ENCODE measurements at regions of chr12 and their contacts with region 1.

Region 1: DNA sequence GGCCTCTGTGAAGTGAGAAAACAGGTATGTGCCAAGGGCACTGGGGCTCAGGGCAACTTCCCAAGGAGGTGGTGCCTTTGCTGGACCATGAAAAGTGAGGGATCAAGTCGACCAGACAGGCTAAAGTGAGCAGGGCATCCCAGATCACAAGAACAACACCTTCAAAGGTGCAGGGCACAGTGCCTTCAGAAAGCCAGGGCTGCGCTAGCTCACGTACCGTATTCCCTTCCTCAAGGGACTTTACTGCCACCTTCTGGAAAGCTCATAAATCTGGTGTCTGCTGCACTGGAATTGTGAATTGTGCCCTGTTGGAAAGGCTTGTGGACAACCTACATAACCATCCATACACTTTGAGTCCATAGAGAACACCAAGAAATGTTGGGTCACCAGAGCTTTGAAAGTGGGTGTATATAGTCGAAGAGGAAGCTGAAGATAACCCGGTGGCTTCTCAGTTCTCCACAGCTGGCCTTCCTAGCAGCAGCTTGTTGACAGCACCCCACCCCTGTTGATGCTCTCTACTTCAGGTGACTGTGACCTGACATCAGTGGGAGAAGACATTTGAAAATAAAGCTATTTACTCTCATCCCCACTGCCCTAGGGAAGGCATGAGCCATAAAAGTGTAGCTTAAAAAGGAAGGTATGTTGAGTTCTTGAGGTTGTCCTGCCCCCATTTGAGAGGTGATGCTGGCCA is 24.5 kb downstream of the FIGNL2 start:
- DNase-seq: no peak
- H3K4me3 ChIP-seq: no peak overlapping the region
- H3K27ac ChIP-seq: no peak overlapping the region
- H3K4me1 ChIP-seq: peaks cover 6 to 29% (median 22%) of the 10 kb centered on the region in 4 experiments
- H3K27me3 ChIP-seq: peaks cover 0 to 18% (median 13%) of the 10 kb centered on the region in 4 experiments; a peak in 5 of 7 replicates
- CTCF ChIP-seq: peak; percentile 34 to 75 (median 67)
- EP300 ChIP-seq: no peak
- POLR2A ChIP-seq: no peak
- RAD21 ChIP-seq: peak; percentile 74 to 76

Region 2: GRCh38 chr12:51424662-51425438 is 399.2 kb before region 1 on chr12 and contains the start of gene SLC4A8:
- CTCF ChIA-PET with region 1: interaction called, 35 read pairs
- POLR2A ChIA-PET with region 1: no interaction called
- DNase-seq: peak; percentile 85 to 96
- H3K4me3 ChIP-seq: peak within 1 kb of the TSS; percentile 52 to 79 (median 62)
- H3K27ac ChIP-seq: no peak within 1 kb of the TSS
- H3K4me1 ChIP-seq: peaks cover 0 to 10% (median 2%) of the 10 kb centered on the region in 4 experiments; a peak in 4 of 7 replicates
- H3K27me3 ChIP-seq: no peaks in the 10 kb centered on the region
- CTCF ChIP-seq: peak; percentile 66 to 83 (median 77)
- EP300 ChIP-seq: no peak
- POLR2A ChIP-seq: peak in 1 of 2 experiments; percentile 57; a peak in 1 of 3 replicates
- RAD21 ChIP-seq: peak; percentile 64 to 80
- total RNA-seq, gene SLC4A8: 13.4 and 15.2 TPM in 2 replicates

Region 3: DNA sequence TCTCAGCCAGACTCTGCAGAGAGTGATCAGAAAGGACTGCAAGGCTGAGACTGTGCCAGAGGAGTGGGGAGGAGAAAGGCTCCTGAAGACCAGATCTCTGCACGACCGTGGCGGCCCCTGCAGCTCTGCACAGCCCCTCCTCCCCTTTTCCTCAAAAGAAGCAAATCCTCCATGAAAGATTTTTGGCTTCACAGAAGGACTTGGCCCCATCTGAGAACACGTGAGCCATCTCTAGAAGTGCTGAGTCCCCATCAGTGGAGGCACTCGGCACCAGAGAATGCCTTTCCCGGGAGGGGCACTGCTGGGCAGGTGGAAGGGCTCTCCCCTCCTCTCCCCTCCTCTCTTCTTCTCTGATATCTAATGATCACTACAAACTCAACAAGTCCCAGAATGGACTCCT is 17.7 kb after region 1 on chr12:
- CTCF ChIA-PET with region 1: interaction called, 47 read pairs
- POLR2A ChIA-PET with region 1: interaction called, 10 read pairs
- DNase-seq: no peak
- H3K4me3 ChIP-seq: no peak overlapping the region
- H3K27ac ChIP-seq: no peak overlapping the region
- H3K4me1 ChIP-seq: peaks cover 13 to 51% (median 33%) of the 10 kb centered on the region in 4 experiments
- H3K27me3 ChIP-seq: peaks cover 0 to 6% (median 4%) of the 10 kb centered on the region in 4 experiments; a peak in 4 of 7 replicates
- CTCF ChIP-seq: no peak
- EP300 ChIP-seq: no peak
- POLR2A ChIP-seq: no peak
- RAD21 ChIP-seq: no peak

Region 4: GRCh38 chr12:51863933-51864832 is 40.2 kb after region 1 on chr12:
- CTCF ChIA-PET with region 1: interaction called, 139 read pairs
- POLR2A ChIA-PET with region 1: interaction called, 12 read pairs
- DNase-seq: peak in 1 of 2 experiments; percentile 89
- H3K4me3 ChIP-seq: peak overlapping the region; percentile 41 to 73 (median 66)
- H3K27ac ChIP-seq: peak overlapping the region; percentile 75
- H3K4me1 ChIP-seq: peaks cover 16 to 36% (median 30%) of the 10 kb centered on the region in 4 experiments
- H3K27me3 ChIP-seq: peaks cover 0 to 23% (median 21%) of the 10 kb centered on the region in 4 experiments; a peak in 5 of 7 replicates
- CTCF ChIP-seq: no peak
- EP300 ChIP-seq: no peak
- POLR2A ChIP-seq: peak in 1 of 2 experiments; percentile 85; a peak in 2 of 3 replicates
- RAD21 ChIP-seq: no peak

Region 5: GRCh38 chr12:51891843-51892242 is 67.8 kb after region 1 on chr12:
- CTCF ChIA-PET with region 1: interaction called, 10 read pairs
- POLR2A ChIA-PET with region 1: interaction called, 4 read pairs
- DNase-seq: no peak
- H3K4me3 ChIP-seq: no peak overlapping the region
- H3K27ac ChIP-seq: no peak overlapping the region
- H3K4me1 ChIP-seq: peaks cover 0 to 12% (median 5%) of the 10 kb centered on the region in 4 experiments; a peak in 6 of 7 replicates
- H3K27me3 ChIP-seq: peaks cover 0 to 10% (median 6%) of the 10 kb centered on the region in 4 experiments; a peak in 3 of 7 replicates
- CTCF ChIP-seq: peak in 1 of 3 experiments; percentile 13; a peak in 1 of 4 replicates
- EP300 ChIP-seq: no peak
- POLR2A ChIP-seq: no peak
- RAD21 ChIP-seq: peak in 1 of 2 experiments; percentile 16; a peak in 2 of 4 replicates

Region 6: DNA sequence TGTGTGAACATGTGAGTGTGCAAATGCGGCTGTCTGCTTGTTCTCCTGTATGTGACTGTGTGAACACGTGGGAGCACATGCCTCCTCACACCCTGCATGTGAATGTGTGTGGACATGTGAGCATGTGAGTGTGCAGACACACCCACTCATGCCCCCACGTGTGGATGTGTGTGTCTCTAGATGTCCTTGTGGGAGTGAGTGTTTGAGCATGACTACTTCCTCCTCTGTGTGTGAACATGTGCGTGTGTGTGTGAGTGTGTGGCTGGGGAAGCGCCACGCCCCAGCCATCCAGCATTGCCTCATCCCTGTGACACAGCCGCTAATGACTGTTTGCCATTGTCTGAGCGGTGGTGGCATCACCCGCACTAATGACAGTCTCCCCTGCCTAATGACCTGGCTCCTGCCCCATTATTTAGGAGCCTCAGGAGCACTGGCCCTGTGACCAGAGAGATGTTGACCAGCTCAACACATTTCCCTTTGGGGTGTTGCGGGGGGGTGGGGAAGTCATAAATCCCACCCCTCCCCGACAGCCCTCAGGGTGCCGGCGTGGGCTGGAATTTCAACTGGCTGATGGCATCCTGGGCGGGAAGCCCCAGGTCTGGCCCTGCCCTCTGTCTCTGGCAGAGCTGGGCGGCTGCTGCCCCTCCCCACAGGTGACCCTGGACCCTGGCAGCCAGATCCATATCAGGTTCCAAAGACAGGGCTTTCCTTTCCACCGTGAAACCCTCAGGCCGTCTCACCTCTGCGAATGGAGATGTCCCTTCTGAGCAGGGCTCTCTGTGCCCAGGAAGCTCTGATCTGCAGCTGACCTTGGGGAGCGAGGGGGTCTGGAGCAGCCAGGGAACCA is 379.3 kb after region 1 on chr12:
- CTCF ChIA-PET with region 1: no interaction called
- POLR2A ChIA-PET with region 1: no interaction called
- DNase-seq: no peak
- H3K4me3 ChIP-seq: no peak overlapping the region
- H3K27ac ChIP-seq: no peak overlapping the region
- H3K4me1 ChIP-seq: peaks cover 0 to 24% (median 6%) of the 10 kb centered on the region in 4 experiments; a peak in 4 of 7 replicates
- H3K27me3 ChIP-seq: no peaks in the 10 kb centered on the region
- CTCF ChIP-seq: no peak
- EP300 ChIP-seq: no peak
- POLR2A ChIP-seq: no peak
- RAD21 ChIP-seq: no peak